Heart left ventricle (tissue), 16 donors: ENCODE measurements at regions of chr12 and their contacts with region 1.

Region 1: GRCh38 chr12:68374307-68374982 is 42.3 kb upstream of the MDM1 start:
- DNase-seq: no peak
- ATAC-seq: no peak
- H3K4me3 ChIP-seq: no peak overlapping the region
- H3K27ac ChIP-seq: no peak overlapping the region
- H3K4me1 ChIP-seq: peaks cover 0 to 36% (median 11%) of the 10 kb centered on the region in 12 donors
- H3K27me3 ChIP-seq: no peaks in the 10 kb centered on the region
- CTCF ChIP-seq: no peak
- POLR2A ChIP-seq: no peak

Region 2: DNA sequence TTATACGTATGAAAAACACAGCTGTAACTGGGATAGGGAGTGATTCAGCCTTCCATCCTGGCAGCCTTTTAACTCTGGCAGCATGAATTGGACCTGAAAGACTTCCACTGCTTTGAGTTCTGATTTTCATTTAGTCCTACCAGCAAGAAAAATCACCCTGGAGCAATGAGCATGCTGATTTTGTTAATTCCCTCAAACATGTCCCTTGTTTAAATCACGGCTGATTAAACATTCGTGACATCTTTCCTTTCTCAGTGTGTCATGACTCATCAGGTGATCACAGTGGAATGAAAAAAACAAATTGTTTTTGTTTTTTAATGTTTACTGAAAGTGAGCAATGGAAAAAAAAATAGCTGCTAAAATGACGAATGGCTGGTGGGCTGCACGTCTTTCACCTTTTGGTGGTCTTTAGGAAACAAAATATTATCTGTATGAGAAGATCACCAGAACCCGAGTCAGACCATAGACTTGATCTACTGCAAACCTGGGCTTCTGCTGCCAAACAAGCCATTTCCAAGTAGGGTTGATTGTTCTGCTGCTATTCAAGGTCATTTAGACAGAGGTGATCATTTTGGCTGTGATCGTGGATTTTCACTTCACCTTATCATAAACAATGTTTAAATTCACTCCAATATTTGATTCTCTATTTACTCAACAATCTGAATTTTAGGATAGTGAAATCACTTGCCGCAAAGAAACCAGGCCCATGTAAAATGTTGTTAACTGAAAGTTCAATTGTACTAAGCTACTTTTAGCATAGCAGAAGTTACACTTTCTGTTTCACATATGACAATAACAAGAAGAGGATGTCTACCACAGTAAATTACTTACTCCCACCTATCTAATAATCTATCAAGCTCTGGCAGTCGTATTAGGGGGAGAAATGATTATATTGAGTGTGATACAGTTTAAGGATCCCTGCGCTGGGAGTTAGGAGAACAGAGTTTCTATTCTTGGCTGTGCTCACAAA is 1172.1 kb before region 1 on chr12:
- intact Hi-C with region 1: no loop called
- DNase-seq: no peak
- ATAC-seq: no peak
- H3K4me3 ChIP-seq: no peak overlapping the region
- H3K27ac ChIP-seq: no peak overlapping the region
- H3K4me1 ChIP-seq: no peaks in the 10 kb centered on the region
- H3K27me3 ChIP-seq: peaks cover 0 to 6% (median 0%) of the 10 kb centered on the region in 9 donors
- CTCF ChIP-seq: no peak
- POLR2A ChIP-seq: no peak

Region 3: DNA sequence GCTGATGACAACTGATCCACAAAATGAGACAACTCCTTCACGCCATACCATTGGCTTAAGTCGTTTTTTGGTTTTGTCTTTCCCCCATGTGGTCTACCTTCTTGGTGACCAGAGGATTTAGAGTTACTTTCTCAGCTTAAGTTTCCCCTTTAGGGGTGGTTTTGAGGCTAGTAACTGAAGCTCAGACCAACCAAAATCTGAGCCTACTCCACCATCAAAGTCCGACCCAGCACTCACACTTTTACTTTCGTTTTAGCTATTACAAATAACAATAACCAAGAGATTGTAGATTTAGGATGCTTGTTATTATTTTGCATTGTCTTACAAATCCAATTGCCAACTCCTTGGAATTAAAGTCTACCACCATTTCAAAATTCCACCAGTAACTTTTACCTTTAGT is 88.4 kb after region 1 on chr12:
- intact Hi-C with region 1: loop called in 4 of 10 experiments (anchors 5 to 10 kb)
- DNase-seq: no peak
- ATAC-seq: no peak
- H3K4me3 ChIP-seq: peak overlapping the region in 1 of 12 donors; percentile 16
- H3K27ac ChIP-seq: no peak overlapping the region
- H3K4me1 ChIP-seq: no peaks in the 10 kb centered on the region
- H3K27me3 ChIP-seq: no peaks in the 10 kb centered on the region
- CTCF ChIP-seq: no peak
- POLR2A ChIP-seq: no peak